ENCODE measurements at regions of chr1 and their contacts with region 1.

Region 1: DNA sequence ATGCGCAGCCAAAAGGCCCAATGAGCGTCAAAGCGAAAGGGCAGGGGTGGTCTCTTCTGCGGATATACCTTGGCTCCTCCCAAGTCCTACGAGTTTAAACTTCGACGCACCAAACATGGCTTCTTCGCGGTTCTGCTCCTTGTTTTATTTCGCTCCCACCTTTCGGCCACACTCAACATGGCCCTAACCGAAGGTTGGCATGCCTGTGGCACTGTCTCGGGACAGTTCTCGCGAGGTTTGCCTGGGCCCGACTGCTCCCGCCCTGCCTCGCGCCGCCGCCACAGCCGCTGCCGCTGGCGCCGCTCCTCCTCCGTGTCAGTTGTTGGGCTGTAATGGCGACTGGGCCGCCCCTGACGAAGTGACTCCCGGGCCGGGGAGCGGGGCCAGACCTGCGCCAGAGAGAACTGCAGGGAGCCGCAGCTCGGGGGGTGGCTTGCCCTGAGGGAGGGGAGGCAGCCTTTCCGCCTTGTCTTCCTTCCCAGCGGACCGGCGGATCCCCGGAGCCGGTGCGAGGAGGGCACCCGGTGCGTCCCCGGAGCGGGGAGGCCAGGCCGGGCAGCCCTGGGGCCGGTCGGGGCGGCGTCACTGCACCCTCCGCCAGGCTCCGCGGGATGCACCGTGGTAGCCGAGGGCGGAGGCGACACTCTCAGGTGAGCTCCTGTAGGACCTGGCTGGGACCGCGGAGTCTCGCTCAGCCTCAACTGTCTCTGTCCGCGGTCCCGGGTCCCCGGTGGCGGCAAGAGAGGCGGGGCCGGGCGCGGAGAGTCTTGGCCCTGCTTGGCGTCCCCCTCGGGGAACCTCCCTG is at the start of gene CEP350:
- DNase-seq: peak; percentile 99
- H3K4me3 ChIP-seq: peak within 1 kb of the TSS; percentile 68 to 98 (median 98)
- H3K27ac ChIP-seq: peak within 1 kb of the TSS; percentile 91 to 98 (median 97)
- H3K4me1 ChIP-seq: peaks cover 0 to 36% (median 16%) of the 10 kb centered on the region in 4 donors
- H3K27me3 ChIP-seq: no peaks in the 10 kb centered on the region
- CTCF ChIP-seq: no peak
- EP300 ChIP-seq: peak in 1 of 4 donors; percentile 36
- POLR2A ChIP-seq: peak; percentile 51 to 79
- total RNA-seq, gene CEP350: 45.2 to 67.6 (median 57.8) TPM

Region 2: GRCh38 chr1:179882243-179883039 is 72.3 kb before region 1 on chr1 and contains the start of gene TOR1AIP1:
- intact Hi-C with region 1: loop called (anchors 1 kb)
- DNase-seq: peak; percentile 99
- H3K4me3 ChIP-seq: peak within 1 kb of the TSS; percentile 61 to 91 (median 86)
- H3K27ac ChIP-seq: peak within 1 kb of the TSS; percentile 95 to 99 (median 98)
- H3K4me1 ChIP-seq: peaks cover 0 to 57% (median 53%) of the 10 kb centered on the region in 4 donors
- H3K27me3 ChIP-seq: no peaks in the 10 kb centered on the region
- CTCF ChIP-seq: peak; percentile 53 to 73 (median 63)
- EP300 ChIP-seq: peak in 1 of 4 donors; percentile 84
- POLR2A ChIP-seq: peak; percentile 86
- total RNA-seq, gene TOR1AIP1: 117 to 152 (median 126) TPM

Region 3: GRCh38 chr1:179910934-179911333 is 43.8 kb before region 1 on chr1:
- intact Hi-C with region 1: no loop called
- DNase-seq: no peak
- H3K4me3 ChIP-seq: no peak overlapping the region
- H3K27ac ChIP-seq: no peak overlapping the region
- H3K4me1 ChIP-seq: peaks cover 0 to 2% (median 0%) of the 10 kb centered on the region in 4 donors
- H3K27me3 ChIP-seq: no peaks in the 10 kb centered on the region
- CTCF ChIP-seq: no peak
- EP300 ChIP-seq: no peak
- POLR2A ChIP-seq: no peak

Region 4: GRCh38 chr1:179938752-179939151 is 15.9 kb before region 1 on chr1:
- intact Hi-C with region 1: no loop called
- DNase-seq: no peak
- H3K4me3 ChIP-seq: no peak overlapping the region
- H3K27ac ChIP-seq: no peak overlapping the region
- H3K4me1 ChIP-seq: no peaks in the 10 kb centered on the region
- H3K27me3 ChIP-seq: no peaks in the 10 kb centered on the region
- CTCF ChIP-seq: no peak
- EP300 ChIP-seq: no peak
- POLR2A ChIP-seq: no peak

Measured in sigmoid colon (tissue), 7 donors.